Activated CD4-positive, alpha-beta T cell treated with anti-CD3 and anti-CD28 coated beads for 36 hours (primary cell): ENCODE measurements at regions of chr17 and their contacts with region 1.

Region 1: DNA sequence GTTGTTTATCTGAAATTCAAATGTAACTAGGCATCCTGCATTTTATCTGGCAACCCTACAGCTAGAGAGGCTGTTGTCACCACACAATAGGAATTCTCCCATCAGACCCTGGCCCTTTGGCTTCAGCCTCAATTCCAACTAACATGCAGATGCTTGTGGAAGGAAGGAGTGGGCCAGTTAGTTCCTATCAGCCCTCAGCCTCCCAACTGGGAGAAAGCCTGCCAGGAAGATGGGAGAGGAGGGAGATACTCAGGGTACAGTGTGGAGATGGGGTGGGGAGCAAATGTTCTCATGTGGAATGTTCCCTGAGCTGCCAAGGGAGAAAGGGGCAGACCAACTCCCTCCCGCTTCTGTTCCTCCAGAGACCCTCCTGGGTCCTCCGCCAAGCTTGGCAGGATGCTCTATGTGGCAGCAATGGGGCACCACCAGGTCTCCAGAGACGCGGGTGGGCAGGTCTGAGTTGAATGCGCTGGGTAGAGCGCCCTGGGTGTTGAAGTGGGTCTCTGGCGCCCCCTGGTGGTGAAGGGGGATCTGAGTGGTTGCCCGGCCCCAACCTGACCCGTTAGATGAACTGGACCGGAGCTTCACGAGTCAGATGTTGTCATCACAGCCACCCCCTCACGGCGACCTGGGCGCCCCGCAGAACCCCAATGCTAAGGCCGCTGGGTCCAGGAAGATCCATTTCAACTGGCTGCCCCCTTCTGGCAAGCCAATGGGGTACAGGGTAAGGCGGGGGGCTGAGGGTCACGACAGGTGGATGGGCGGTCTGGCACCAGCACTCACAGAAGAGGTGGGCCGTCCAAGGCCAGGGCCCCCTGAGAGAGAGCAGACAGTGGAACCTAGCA is 15.2 kb downstream of the GALK1 start:
- DNase-seq: peak; percentile 95
- ATAC-seq: peak; percentile 75
- H3K4me3 Mint-ChIP-seq: no peak overlapping the region
- H3K27ac Mint-ChIP-seq: no peak overlapping the region
- H3K4me1 Mint-ChIP-seq: peaks cover 18% of the 10 kb centered on the region
- H3K27me3 Mint-ChIP-seq: no peaks in the 10 kb centered on the region

Region 2: GRCh38 chr17:75589012-75589918 is 160.5 kb before region 1 on chr17:
- CTCF ChIA-PET with region 1: interaction called, 5 read pairs
- POLR2A ChIA-PET with region 1: no interaction called
- intact Hi-C with region 1: loop called in 1 of 2 experiments (anchors 1 kb)
- DNase-seq: peak; percentile 99
- ATAC-seq: peak; percentile 90
- H3K4me3 Mint-ChIP-seq: peak overlapping the region; percentile 72
- H3K27ac Mint-ChIP-seq: peak overlapping the region; percentile 42
- H3K4me1 Mint-ChIP-seq: no peaks in the 10 kb centered on the region
- H3K27me3 Mint-ChIP-seq: peaks cover 2% of the 10 kb centered on the region

Region 3: GRCh38 chr17:75645889-75646637 is 103.7 kb before region 1 on chr17:
- CTCF ChIA-PET with region 1: interaction called, 38 read pairs
- POLR2A ChIA-PET with region 1: no interaction called
- intact Hi-C with region 1: no loop called
- DNase-seq: no peak
- ATAC-seq: no peak
- H3K4me3 Mint-ChIP-seq: no peak overlapping the region
- H3K27ac Mint-ChIP-seq: no peak overlapping the region
- H3K4me1 Mint-ChIP-seq: no peaks in the 10 kb centered on the region
- H3K27me3 Mint-ChIP-seq: no peaks in the 10 kb centered on the region

Region 4: GRCh38 chr17:75679706-75680442 is 69.9 kb before region 1 on chr17:
- CTCF ChIA-PET with region 1: interaction called, 140 read pairs
- POLR2A ChIA-PET with region 1: no interaction called
- intact Hi-C with region 1: loop called (anchors 1 kb)
- DNase-seq: no peak
- ATAC-seq: no peak
- H3K4me3 Mint-ChIP-seq: no peak overlapping the region
- H3K27ac Mint-ChIP-seq: no peak overlapping the region
- H3K4me1 Mint-ChIP-seq: peaks cover 15% of the 10 kb centered on the region
- H3K27me3 Mint-ChIP-seq: no peaks in the 10 kb centered on the region

Region 5: GRCh38 chr17:75720725-75721462 is 28.9 kb before region 1 on chr17 and contains the start of gene ITGB4:
- CTCF ChIA-PET with region 1: interaction called, 13 read pairs
- POLR2A ChIA-PET with region 1: no interaction called
- intact Hi-C with region 1: no loop called
- DNase-seq: peak; percentile 72
- ATAC-seq: peak; percentile 88
- H3K4me3 Mint-ChIP-seq: peak within 1 kb of the TSS; percentile 61
- H3K27ac Mint-ChIP-seq: no peak within 1 kb of the TSS
- H3K4me1 Mint-ChIP-seq: peaks cover 5% of the 10 kb centered on the region
- H3K27me3 Mint-ChIP-seq: peaks cover 15% of the 10 kb centered on the region
- total RNA-seq, gene ITGB4: 0.62 to 1.5 TPM

Region 6: GRCh38 chr17:75779231-75779986 is 29.6 kb after region 1 on chr17:
- CTCF ChIA-PET with region 1: interaction called, 11 read pairs
- POLR2A ChIA-PET with region 1: interaction called, 13 read pairs
- intact Hi-C with region 1: loop called in 1 of 2 experiments (anchors 1 kb)
- DNase-seq: peak; percentile 96
- ATAC-seq: peak; percentile 69
- H3K4me3 Mint-ChIP-seq: peak overlapping the region; percentile 98
- H3K27ac Mint-ChIP-seq: peak overlapping the region; percentile 99
- H3K4me1 Mint-ChIP-seq: peaks cover 46% of the 10 kb centered on the region
- H3K27me3 Mint-ChIP-seq: peaks cover 1% of the 10 kb centered on the region